SK-N-SH (cell line): ENCODE measurements at regions of chr3 and their contacts with region 1.

Region 1: DNA sequence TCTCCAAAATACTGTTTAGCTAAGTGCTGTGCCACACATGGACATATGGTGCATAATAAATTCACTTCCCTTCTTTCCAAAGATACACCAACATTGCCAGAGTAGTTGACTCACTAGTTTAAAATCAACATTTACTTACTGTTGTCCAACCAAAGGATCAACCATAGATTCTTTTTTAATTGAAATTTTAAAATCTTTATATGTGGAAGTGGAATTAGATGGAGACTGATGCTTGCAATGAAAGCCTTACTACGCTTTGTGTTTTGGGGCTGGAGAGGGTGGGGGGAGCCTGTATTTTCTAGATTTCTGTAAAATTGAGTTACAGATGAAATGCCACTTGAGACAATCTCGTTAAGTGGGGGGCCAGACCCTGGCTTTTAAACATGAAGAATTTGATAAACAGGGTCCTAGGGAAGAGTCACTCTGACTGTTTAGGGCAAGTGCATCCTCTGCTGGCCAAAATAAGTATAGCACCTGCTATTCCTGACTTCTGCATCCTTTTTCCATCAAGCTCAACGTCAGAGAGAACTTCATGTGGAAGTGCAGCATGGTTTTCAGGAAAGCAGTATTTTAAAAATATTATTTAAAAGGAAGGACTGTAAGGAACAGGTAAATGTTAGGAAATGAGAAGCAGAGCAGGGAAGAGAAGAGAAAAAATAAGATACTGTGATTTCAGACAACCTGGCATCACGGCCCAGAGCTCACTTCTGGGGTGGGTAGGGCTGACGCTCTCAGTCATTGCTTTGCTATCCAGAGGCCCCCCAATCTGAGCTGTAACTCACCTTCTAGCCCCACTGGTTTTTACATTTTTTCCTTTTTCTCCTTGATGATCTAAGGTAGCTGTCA is 76.7 kb downstream of the BOC start:
- DNase-seq: peak; percentile 72
- H3K4me3 ChIP-seq: peak overlapping the region in 1 of 2 experiments; percentile 8; a peak in 1 of 4 replicates
- H3K27ac ChIP-seq: peak overlapping the region in 1 of 2 experiments; percentile 40; a peak in 2 of 4 replicates
- H3K4me1 ChIP-seq: peaks cover 10 to 15% of the 10 kb centered on the region in 2 experiments
- H3K27me3 ChIP-seq: no peaks in the 10 kb centered on the region
- CTCF ChIP-seq: peak; percentile 99
- EP300 ChIP-seq: no peak
- RAD21 ChIP-seq: peak; percentile 100

Region 2: GRCh38 chr3:112948346-112948838 is 339.6 kb before region 1 on chr3:
- CTCF ChIA-PET with region 1: no interaction called
- POLR2A ChIA-PET with region 1: no interaction called
- DNase-seq: no peak
- H3K4me3 ChIP-seq: no peak overlapping the region
- H3K27ac ChIP-seq: no peak overlapping the region
- H3K4me1 ChIP-seq: no peaks in the 10 kb centered on the region
- H3K27me3 ChIP-seq: no peaks in the 10 kb centered on the region
- CTCF ChIP-seq: no peak
- EP300 ChIP-seq: no peak
- RAD21 ChIP-seq: no peak

Region 3: GRCh38 chr3:113043686-113044085 is 244.3 kb before region 1 on chr3:
- CTCF ChIA-PET with region 1: interaction called, 10 read pairs
- POLR2A ChIA-PET with region 1: no interaction called
- DNase-seq: no peak
- H3K4me3 ChIP-seq: no peak overlapping the region
- H3K27ac ChIP-seq: no peak overlapping the region
- H3K4me1 ChIP-seq: no peaks in the 10 kb centered on the region
- H3K27me3 ChIP-seq: no peaks in the 10 kb centered on the region
- CTCF ChIP-seq: no peak
- EP300 ChIP-seq: no peak
- RAD21 ChIP-seq: no peak

Region 4: DNA sequence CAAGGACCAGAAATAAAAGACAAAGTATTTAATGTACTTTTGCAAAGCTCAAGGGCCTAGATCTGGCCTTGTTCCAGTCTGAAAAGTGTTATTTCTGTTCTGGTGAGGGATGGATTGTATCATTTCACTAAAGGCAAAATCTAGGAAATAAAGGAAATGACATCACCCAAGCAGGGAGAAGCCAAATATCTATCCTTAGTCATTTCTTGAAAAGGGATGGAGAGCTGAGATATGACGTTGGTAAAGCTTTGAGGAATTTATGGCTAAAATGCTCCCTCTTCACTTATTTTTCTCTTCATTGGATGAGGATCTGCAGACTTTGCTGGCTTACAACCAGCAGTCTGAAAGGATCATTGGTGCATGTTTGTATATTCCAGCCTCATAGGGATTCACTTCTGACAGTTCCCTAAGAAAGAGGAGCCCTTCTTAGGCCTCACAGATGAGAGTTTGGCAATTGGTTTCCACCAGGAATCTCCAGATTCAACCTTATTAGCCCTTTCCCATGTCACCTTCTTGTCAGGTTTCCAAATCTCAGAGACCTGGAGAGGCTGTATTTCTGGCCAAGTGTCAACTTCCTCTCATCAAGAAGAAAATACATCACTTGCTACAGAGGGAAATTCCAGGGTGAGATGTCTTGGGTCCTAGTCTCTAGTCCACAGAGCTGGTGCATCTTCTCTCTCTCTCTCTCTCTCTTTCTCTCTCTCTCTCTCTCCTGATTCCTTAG is 170.4 kb before region 1 on chr3:
- CTCF ChIA-PET with region 1: interaction called, 10 read pairs
- POLR2A ChIA-PET with region 1: no interaction called
- DNase-seq: no peak
- H3K4me3 ChIP-seq: no peak overlapping the region
- H3K27ac ChIP-seq: peak overlapping the region; percentile 71 to 87; a peak in 3 of 4 replicates
- H3K4me1 ChIP-seq: peaks cover 0 to 13% of the 10 kb centered on the region in 2 experiments; a peak in 2 of 4 replicates
- H3K27me3 ChIP-seq: no peaks in the 10 kb centered on the region
- CTCF ChIP-seq: no peak
- EP300 ChIP-seq: peak in 1 of 2 experiments; percentile 74; a peak in 2 of 4 replicates
- RAD21 ChIP-seq: no peak

Region 5: GRCh38 chr3:113142476-113142875 is 145.6 kb before region 1 on chr3:
- CTCF ChIA-PET with region 1: interaction called, 44 read pairs
- POLR2A ChIA-PET with region 1: interaction called, 3 read pairs
- DNase-seq: no peak
- H3K4me3 ChIP-seq: no peak overlapping the region
- H3K27ac ChIP-seq: no peak overlapping the region
- H3K4me1 ChIP-seq: peaks cover 0 to 8% of the 10 kb centered on the region in 2 experiments; a peak in 2 of 4 replicates
- H3K27me3 ChIP-seq: no peaks in the 10 kb centered on the region
- CTCF ChIP-seq: no peak
- EP300 ChIP-seq: no peak
- RAD21 ChIP-seq: no peak

Region 6: GRCh38 chr3:113166719-113167492 is 121.1 kb before region 1 on chr3:
- CTCF ChIA-PET with region 1: interaction called, 13 read pairs
- POLR2A ChIA-PET with region 1: interaction called, 5 read pairs
- DNase-seq: peak; percentile 57
- H3K4me3 ChIP-seq: peak overlapping the region in 1 of 2 experiments; percentile 25; a peak in 2 of 4 replicates
- H3K27ac ChIP-seq: peak overlapping the region; percentile 80 to 95
- H3K4me1 ChIP-seq: peaks cover 12 to 61% of the 10 kb centered on the region in 2 experiments; a peak in 3 of 4 replicates
- H3K27me3 ChIP-seq: no peaks in the 10 kb centered on the region
- CTCF ChIP-seq: no peak
- EP300 ChIP-seq: peak; percentile 23 to 94; a peak in 3 of 4 replicates
- RAD21 ChIP-seq: peak; percentile 34

Region 7: GRCh38 chr3:113223475-113224281 is 64.3 kb before region 1 on chr3:
- CTCF ChIA-PET with region 1: interaction called, 11 read pairs
- POLR2A ChIA-PET with region 1: no interaction called
- DNase-seq: no peak
- H3K4me3 ChIP-seq: no peak overlapping the region
- H3K27ac ChIP-seq: no peak overlapping the region; a peak in 1 of 4 replicates
- H3K4me1 ChIP-seq: peaks cover 0 to 33% of the 10 kb centered on the region in 2 experiments; a peak in 2 of 4 replicates
- H3K27me3 ChIP-seq: no peaks in the 10 kb centered on the region
- CTCF ChIP-seq: no peak
- EP300 ChIP-seq: no peak
- RAD21 ChIP-seq: no peak

Region 8: GRCh38 chr3:113275929-113276750 is 11.9 kb before region 1 on chr3:
- CTCF ChIA-PET with region 1: interaction called, 29 read pairs
- POLR2A ChIA-PET with region 1: no interaction called
- DNase-seq: no peak
- H3K4me3 ChIP-seq: no peak overlapping the region
- H3K27ac ChIP-seq: peak overlapping the region in 1 of 2 experiments; percentile 22; a peak in 1 of 4 replicates
- H3K4me1 ChIP-seq: peaks cover 0 to 10% of the 10 kb centered on the region in 2 experiments; a peak in 1 of 4 replicates
- H3K27me3 ChIP-seq: no peaks in the 10 kb centered on the region
- CTCF ChIP-seq: peak; percentile 18; the same call in 1 of the 2 replicates
- EP300 ChIP-seq: no peak
- RAD21 ChIP-seq: no peak

Region 9: DNA sequence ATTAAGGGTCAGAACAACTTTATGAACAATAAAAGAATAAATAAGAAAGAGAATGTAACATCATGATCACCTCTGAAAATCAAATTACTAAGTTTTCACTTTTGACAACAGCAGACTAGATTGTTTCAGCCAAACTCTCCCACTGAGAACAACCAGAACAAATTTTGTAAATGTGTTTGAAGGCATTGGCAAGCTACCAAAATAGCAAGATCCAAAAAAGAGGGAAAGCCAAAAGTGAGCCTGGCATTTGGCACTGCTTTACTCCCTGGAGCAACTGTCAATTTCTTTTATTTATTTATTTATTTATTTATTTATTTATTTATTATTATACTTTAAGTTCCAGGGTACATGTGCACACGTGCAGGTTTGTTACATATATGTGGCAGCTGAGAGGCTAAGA is 86.1 kb after region 1 on chr3:
- CTCF ChIA-PET with region 1: no interaction called
- POLR2A ChIA-PET with region 1: no interaction called
- DNase-seq: no peak
- H3K4me3 ChIP-seq: no peak overlapping the region
- H3K27ac ChIP-seq: no peak overlapping the region
- H3K4me1 ChIP-seq: no peaks in the 10 kb centered on the region
- H3K27me3 ChIP-seq: no peaks in the 10 kb centered on the region
- CTCF ChIP-seq: no peak
- EP300 ChIP-seq: no peak
- RAD21 ChIP-seq: no peak

Region 10: DNA sequence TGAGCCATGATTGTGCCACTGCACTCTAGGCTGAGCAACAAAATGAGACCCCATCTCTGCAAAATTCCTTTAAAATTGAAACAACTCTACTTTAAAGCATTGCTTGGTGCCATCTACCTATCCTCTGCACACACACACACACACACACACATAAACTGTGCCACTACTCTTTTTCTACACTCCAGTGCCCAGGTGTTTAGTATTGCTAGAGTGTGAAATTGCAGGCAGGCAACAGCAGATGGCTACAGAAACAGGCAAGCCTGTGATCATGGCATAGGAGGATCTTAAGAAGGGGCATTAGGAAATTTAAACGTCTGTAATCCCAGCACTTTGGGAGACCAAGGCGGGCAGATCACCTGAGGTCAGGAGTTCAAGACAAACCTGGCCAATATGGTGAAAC is 283.3 kb after region 1 on chr3:
- CTCF ChIA-PET with region 1: no interaction called
- POLR2A ChIA-PET with region 1: no interaction called
- DNase-seq: no peak
- H3K4me3 ChIP-seq: no peak overlapping the region
- H3K27ac ChIP-seq: no peak overlapping the region
- H3K4me1 ChIP-seq: no peaks in the 10 kb centered on the region
- H3K27me3 ChIP-seq: peaks cover 5% of the 10 kb centered on the region; the same call in 1 of the 2 replicates
- CTCF ChIP-seq: no peak
- EP300 ChIP-seq: no peak
- RAD21 ChIP-seq: no peak

Region 11: GRCh38 chr3:113696658-113697499 is 408.9 kb after region 1 on chr3:
- CTCF ChIA-PET with region 1: no interaction called
- POLR2A ChIA-PET with region 1: no interaction called
- DNase-seq: peak; percentile 98
- H3K4me3 ChIP-seq: peak overlapping the region; percentile 80 to 88
- H3K27ac ChIP-seq: peak overlapping the region; percentile 72 to 95; a peak in 3 of 4 replicates
- H3K4me1 ChIP-seq: no peaks in the 10 kb centered on the region; a peak in 2 of 4 replicates
- H3K27me3 ChIP-seq: no peaks in the 10 kb centered on the region
- CTCF ChIP-seq: no peak
- EP300 ChIP-seq: no peak
- RAD21 ChIP-seq: no peak